ENCODE measurements at regions of chr16 and their contacts with region 1.

Region 1: GRCh38 chr16:68040507-68041288 is 17.6 kb downstream of the DUS2 start:
- DNase-seq: peak; percentile 58 to 81
- ATAC-seq: peak; percentile 79 to 87
- H3K4me3 ChIP-seq: no peak overlapping the region
- H3K27ac ChIP-seq: peak overlapping the region in 3 of 4 donors; percentile 19 to 30 (median 28)
- H3K4me1 ChIP-seq: peaks cover 3 to 5% of the 10 kb centered on the region in 2 donors
- H3K27me3 ChIP-seq: no peaks in the 10 kb centered on the region
- CTCF ChIP-seq: peak; percentile 79 to 95 (median 92)
- POLR2A ChIP-seq: no peak

Region 2: GRCh38 chr16:67672739-67673662 is 367.7 kb before region 1 on chr16:
- in situ Hi-C with region 1: loop called in 1 of 4 experiments (anchors 25 kb)
- intact Hi-C with region 1: loop called (anchors 5 kb)
- DNase-seq: peak; percentile 40 to 57
- ATAC-seq: peak; percentile 38 to 51
- H3K4me3 ChIP-seq: no peak overlapping the region
- H3K27ac ChIP-seq: peak overlapping the region; percentile 50 to 80 (median 73)
- H3K4me1 ChIP-seq: peaks cover 13 to 21% of the 10 kb centered on the region in 2 donors
- H3K27me3 ChIP-seq: no peaks in the 10 kb centered on the region
- CTCF ChIP-seq: peak; percentile 63 to 82 (median 74)
- POLR2A ChIP-seq: no peak

Region 3: GRCh38 chr16:67806428-67807147 is 234.1 kb before region 1 on chr16 and contains the starts of genes RANBP10 and TSNAXIP1:
- in situ Hi-C with region 1: loop called (anchors 10 to 25 kb)
- intact Hi-C with region 1: no loop called
- DNase-seq: peak; percentile 98 to 99
- ATAC-seq: peak; percentile 97 to 98
- H3K4me3 ChIP-seq: peak within 1 kb of the TSS; percentile 86 to 99 (median 96)
- H3K27ac ChIP-seq: peak within 1 kb of the TSS; percentile 92 to 99 (median 97)
- H3K4me1 ChIP-seq: peaks cover 32 to 35% of the 10 kb centered on the region in 2 donors
- H3K27me3 ChIP-seq: no peaks in the 10 kb centered on the region
- CTCF ChIP-seq: no peak
- POLR2A ChIP-seq: peak; percentile 92 to 97
- total RNA-seq, gene RANBP10: 12.6 to 46.6 (median 14.8) TPM
- total RNA-seq, gene TSNAXIP1: 0.27 to 11.0 (median 0.56) TPM in 3 of 4 donors, not detected in the other

Region 4: GRCh38 chr16:67816240-67817031 is 224.3 kb before region 1 on chr16:
- in situ Hi-C with region 1: loop called (anchors 10 to 25 kb)
- intact Hi-C with region 1: loop called (anchors 1 kb)
- DNase-seq: peak; percentile 69 to 81
- ATAC-seq: peak; percentile 91 to 96
- H3K4me3 ChIP-seq: no peak overlapping the region
- H3K27ac ChIP-seq: peak overlapping the region; percentile 49 to 78 (median 59)
- H3K4me1 ChIP-seq: no peaks in the 10 kb centered on the region
- H3K27me3 ChIP-seq: no peaks in the 10 kb centered on the region
- CTCF ChIP-seq: peak; percentile 99 to 100 (median 100)
- POLR2A ChIP-seq: no peak

Region 5: DNA sequence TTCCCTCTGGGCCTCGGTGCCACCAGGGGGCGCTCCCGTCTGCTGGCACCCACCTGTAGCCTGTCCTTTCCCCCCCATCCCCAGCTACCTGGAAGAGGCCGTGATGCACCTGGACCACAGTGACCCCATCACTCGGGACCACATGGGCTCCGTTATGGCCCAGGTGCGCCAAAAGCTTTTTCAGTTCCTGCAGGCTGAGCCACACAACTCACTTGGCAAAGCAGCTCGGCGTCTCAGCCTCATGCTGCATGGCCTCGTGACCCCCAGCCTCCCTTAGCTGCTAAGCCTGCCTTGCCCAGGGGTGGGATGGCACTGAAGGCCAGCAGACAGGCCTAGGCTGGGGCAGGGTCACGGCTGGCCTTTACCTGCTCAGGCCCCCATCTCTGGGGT is 156.8 kb before region 1 on chr16:
- in situ Hi-C with region 1: no loop called
- intact Hi-C with region 1: loop called (anchors 5 kb)
- DNase-seq: peak in 1 of 2 donors; percentile 64
- ATAC-seq: peak in 1 of 2 donors; percentile 22
- H3K4me3 ChIP-seq: no peak overlapping the region
- H3K27ac ChIP-seq: peak overlapping the region; percentile 87 to 95 (median 90)
- H3K4me1 ChIP-seq: peaks cover 51 to 52% of the 10 kb centered on the region in 2 donors
- H3K27me3 ChIP-seq: no peaks in the 10 kb centered on the region
- CTCF ChIP-seq: peak; percentile 76 to 91 (median 91)
- POLR2A ChIP-seq: no peak

Region 6: GRCh38 chr16:67968400-67969253 is 72.1 kb before region 1 on chr16 and contains the start of gene SLC12A4:
- in situ Hi-C with region 1: no loop called
- intact Hi-C with region 1: no loop called
- DNase-seq: peak; percentile 53 to 66
- ATAC-seq: peak; percentile 42 to 62
- H3K4me3 ChIP-seq: peak within 1 kb of the TSS; percentile 69 to 80 (median 80)
- H3K27ac ChIP-seq: peak within 1 kb of the TSS; percentile 87 to 95 (median 89)
- H3K4me1 ChIP-seq: peaks cover 42 to 46% of the 10 kb centered on the region in 2 donors
- H3K27me3 ChIP-seq: no peaks in the 10 kb centered on the region
- CTCF ChIP-seq: peak in 1 of 5 experiments; percentile 16
- POLR2A ChIP-seq: peak; percentile 93 to 94
- total RNA-seq, gene SLC12A4: 10.4 to 30.8 (median 15.8) TPM

Region 7: GRCh38 chr16:67993189-67994039 is 47.3 kb before region 1 on chr16:
- in situ Hi-C with region 1: loop called in 2 of 4 experiments (anchors 5 to 10 kb)
- intact Hi-C with region 1: loop called (anchors 1 kb)
- DNase-seq: peak; percentile 62 to 77
- ATAC-seq: peak; percentile 73 to 74
- H3K4me3 ChIP-seq: peak overlapping the region; percentile 43 to 59 (median 50)
- H3K27ac ChIP-seq: peak overlapping the region; percentile 78 to 83 (median 80)
- H3K4me1 ChIP-seq: peaks cover 24 to 34% of the 10 kb centered on the region in 2 donors
- H3K27me3 ChIP-seq: no peaks in the 10 kb centered on the region
- CTCF ChIP-seq: peak; percentile 97 to 100 (median 100)
- POLR2A ChIP-seq: peak; percentile 39 to 44

Region 8: DNA sequence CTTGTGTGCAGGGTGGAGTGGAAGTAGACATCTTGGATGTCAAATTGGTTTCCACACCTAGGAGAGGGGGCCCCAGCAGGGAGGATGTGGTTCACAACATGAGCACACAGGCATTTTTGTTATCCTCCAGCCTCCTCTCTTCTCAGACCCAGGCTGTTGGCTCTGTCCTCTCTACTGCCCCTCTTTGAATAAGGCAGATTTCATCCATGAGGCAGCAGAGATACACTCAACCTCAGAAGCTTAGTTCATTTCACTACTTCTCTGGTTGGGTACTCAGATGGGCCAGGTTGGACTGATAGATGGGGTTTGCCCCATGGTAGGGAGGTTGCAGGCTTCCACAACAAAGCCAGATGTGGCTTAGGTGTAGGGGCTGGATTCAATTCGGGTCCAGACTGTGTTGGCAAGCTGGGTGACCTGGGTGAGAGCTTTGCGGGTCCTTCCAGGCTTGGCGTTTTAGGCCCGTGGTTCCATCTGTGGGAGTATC is 22.3 kb after region 1 on chr16:
- in situ Hi-C with region 1: no loop called
- intact Hi-C with region 1: no loop called
- DNase-seq: no peak
- ATAC-seq: no peak
- H3K4me3 ChIP-seq: no peak overlapping the region
- H3K27ac ChIP-seq: no peak overlapping the region
- H3K4me1 ChIP-seq: peaks cover 23 to 35% of the 10 kb centered on the region in 2 donors
- H3K27me3 ChIP-seq: no peaks in the 10 kb centered on the region
- CTCF ChIP-seq: no peak
- POLR2A ChIP-seq: no peak

Region 9: DNA sequence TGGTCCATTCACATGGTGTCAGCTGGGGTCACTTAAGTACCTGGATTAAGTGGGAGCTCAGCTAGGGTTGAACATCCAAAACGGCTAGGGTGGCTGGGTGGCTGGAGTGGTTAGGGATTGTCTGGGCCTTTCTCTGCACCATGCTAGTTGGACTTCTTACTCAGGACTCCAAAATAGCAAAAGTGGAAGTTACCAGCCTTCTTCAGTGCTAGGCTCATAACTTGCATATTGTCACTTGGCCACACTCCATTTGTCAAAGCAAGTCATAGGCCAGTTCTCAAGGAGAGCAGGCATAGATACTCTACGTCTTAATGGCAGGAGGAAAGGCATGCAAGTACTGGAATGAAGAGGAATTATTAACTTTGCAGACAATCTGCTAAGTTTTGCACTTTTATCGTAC is 125.6 kb after region 1 on chr16:
- in situ Hi-C with region 1: no loop called
- intact Hi-C with region 1: no loop called
- DNase-seq: no peak
- ATAC-seq: no peak
- H3K4me3 ChIP-seq: no peak overlapping the region
- H3K27ac ChIP-seq: peak overlapping the region in 1 of 4 donors; percentile 38
- H3K4me1 ChIP-seq: peaks cover 0 to 4% of the 10 kb centered on the region in 2 donors
- H3K27me3 ChIP-seq: no peaks in the 10 kb centered on the region
- CTCF ChIP-seq: no peak
- POLR2A ChIP-seq: no peak

Measured in gastrocnemius medialis (tissue), 4 donors.